ENCODE measurements at regions of chr2 and their contacts with region 1.

Region 1: DNA sequence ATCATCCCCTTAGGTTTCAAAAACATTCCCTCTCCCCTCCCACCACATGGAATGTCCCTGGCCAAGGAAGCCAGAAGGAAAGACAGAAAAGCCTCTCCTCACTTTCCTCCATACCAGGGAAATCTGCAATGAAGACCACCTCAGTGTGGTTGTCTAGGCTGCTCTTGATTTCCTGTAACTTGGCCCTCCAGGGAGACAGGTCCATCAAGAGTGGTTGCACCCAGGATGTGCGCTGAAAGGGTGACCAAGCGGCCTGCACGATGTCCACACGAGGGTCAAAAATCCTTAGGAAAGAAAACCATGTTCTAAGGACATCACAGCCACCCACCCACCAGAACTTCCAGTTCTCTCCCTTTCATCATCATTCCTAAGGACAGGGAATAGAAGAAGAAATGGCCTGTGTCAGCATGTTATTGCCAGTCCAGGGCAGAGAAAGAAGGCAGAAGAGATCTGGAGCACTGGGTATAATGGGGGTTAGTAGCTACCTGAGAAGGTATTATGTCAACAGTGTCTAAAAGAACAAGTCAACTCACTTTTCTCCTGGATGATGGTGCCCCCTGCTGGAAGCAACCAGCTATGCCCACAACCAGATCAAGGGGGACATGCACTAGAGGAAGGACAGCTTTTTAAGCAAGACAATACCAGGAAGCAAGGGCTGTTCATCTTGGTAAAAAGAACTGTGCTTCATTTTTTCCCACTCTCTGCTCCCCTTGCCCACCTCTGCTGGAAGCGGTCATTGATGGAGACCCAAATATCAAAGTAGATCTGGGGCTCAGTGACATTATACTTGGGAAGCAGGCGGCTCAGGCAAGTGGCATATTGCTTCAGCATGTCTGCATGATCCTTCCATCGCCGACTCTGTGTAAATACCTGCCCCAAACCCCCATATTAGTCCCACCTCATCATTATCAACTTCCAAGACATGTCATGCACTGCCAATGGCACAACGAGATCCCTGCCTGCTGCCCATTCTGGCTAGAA is 9.3 kb downstream of the GGCX start:
- DNase-seq: no peak
- H3K4me3 ChIP-seq: no peak overlapping the region
- CTCF ChIP-seq: peak; percentile 81

Region 2: GRCh38 chr2:85318222-85319074 is 233.5 kb before region 1 on chr2:
- CTCF ChIA-PET with region 1: interaction called, 11 read pairs
- POLR2A ChIA-PET with region 1: no interaction called
- DNase-seq: peak; percentile 41
- H3K4me3 ChIP-seq: no peak overlapping the region
- CTCF ChIP-seq: no peak

Region 3: GRCh38 chr2:85354286-85355072 is 197.5 kb before region 1 on chr2 and contains the starts of genes ELMOD3 and RETSAT:
- CTCF ChIA-PET with region 1: interaction called, 19 read pairs
- POLR2A ChIA-PET with region 1: interaction called, 5 read pairs
- DNase-seq: peak; percentile 97
- H3K4me3 ChIP-seq: peak within 1 kb of the TSS; percentile 91
- CTCF ChIP-seq: no peak

Region 4: GRCh38 chr2:85409845-85410583 is 142.0 kb before region 1 on chr2 and contains the start of gene CAPG:
- CTCF ChIA-PET with region 1: interaction called, 18 read pairs
- POLR2A ChIA-PET with region 1: no interaction called
- DNase-seq: no peak
- H3K4me3 ChIP-seq: no peak within 1 kb of the TSS
- CTCF ChIP-seq: no peak

Region 5: DNA sequence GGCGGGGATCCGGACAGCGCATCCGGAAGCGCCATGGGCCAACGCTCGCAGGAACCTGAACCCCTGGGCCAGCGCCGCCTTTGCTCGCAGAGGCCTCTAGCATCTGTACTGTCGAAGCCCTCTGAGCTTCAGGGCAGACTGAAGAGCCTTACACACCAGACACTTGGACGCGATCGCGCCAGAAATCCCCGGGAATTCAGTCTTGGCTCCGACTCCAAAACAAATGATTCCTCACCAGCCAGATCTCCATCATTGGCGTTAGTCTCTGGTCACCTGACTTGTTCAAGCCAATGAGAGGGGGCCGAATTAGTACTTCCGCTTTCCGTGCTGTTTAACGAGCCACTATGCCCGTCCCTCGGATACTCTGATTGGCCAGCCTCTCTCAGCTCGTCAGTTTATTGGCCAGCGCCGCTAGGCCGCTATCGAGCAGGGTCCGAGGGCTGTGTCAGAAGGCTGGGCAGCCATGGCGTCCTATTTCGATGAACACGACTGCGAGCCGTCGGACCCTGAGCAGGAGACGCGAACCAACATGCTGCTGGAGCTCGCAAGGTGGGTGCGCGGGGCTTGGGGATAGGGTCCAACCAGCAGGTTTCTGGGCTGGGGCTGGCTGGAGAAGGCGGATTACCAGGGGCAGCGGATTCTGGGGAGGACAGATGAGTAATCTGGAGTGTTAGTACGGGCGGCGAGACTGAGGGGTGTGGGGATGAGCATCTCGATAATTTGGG is 43.5 kb after region 1 on chr2 and contains the start of gene RNF181:
- CTCF ChIA-PET with region 1: interaction called, 10 read pairs
- POLR2A ChIA-PET with region 1: interaction called, 5 read pairs
- DNase-seq: peak; percentile 97
- H3K4me3 ChIP-seq: peak within 1 kb of the TSS; percentile 100
- CTCF ChIP-seq: no peak

Measured in AG04449 (cell line).